ENCODE measurements at regions of chr14 and their contacts with region 1.

Region 1: DNA sequence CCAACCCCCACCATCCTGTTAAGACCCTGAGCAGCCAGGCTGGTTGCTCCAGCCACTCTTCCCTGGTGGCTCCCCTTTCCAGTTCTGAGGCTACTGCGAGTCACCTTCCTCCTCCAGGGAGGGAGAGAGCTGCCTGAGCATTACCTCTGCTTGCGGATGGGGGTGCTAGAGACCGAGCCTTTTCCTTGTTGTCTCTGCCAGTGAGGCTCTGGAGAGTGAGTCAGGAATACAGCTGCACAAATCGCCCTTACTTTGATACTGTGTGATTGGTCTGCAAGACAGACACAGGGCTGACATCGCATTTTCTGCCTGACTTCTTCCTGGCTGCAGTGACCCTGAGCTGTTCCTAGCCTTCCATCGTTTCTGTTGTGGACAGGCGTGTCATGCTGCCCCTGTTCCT is 94.3 kb downstream of the SLC25A47 start:
- DNase-seq: peak; percentile 88
- H3K4me3 ChIP-seq: no peak overlapping the region
- H3K27ac ChIP-seq: no peak overlapping the region
- H3K4me1 ChIP-seq: no peaks in the 10 kb centered on the region
- H3K27me3 ChIP-seq: no peaks in the 10 kb centered on the region
- CTCF ChIP-seq: peak; percentile 72 to 82
- POLR2A ChIP-seq: no peak

Region 2: DNA sequence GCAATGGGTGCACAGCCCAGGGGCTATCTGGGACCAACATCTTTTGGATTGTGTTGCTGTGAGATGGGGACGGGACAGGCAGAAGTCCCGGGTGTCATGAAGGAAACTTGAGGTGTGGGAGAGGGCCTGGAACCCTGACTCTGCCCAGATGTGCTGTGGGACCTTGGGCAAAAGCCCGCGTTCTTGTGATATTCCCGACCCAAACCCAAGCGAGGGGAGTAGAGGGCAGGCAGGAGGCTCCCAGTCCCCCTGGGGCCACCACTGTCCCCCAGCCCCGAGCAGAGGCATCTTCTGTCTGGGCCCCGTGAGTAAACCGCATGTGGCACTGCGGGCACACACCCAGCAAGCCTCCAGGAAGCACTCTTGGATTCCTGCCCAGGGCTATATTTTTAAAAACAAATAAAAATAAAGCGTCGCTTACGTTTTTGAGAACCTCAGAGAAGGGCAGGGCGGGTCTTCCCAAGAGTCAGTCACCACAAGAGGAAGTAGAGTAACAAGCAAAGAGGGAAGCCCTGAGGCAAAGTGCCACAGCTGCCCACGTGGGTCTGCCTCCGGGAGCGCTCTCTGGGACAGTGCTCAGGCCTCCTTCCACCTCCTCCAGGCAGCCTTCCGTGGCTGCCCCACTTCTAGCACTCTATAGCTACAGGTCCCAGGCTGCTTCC is 130.3 kb after region 1 on chr14:
- CTCF ChIA-PET with region 1: no interaction called
- POLR2A ChIA-PET with region 1: no interaction called
- dilution Hi-C with region 1: no loop called
- intact Hi-C with region 1: loop called (anchors 10 kb)
- DNase-seq: peak; percentile 34
- H3K4me3 ChIP-seq: no peak overlapping the region
- H3K27ac ChIP-seq: no peak overlapping the region
- H3K4me1 ChIP-seq: peaks cover 6% of the 10 kb centered on the region
- H3K27me3 ChIP-seq: no peaks in the 10 kb centered on the region
- CTCF ChIP-seq: no peak
- POLR2A ChIP-seq: no peak

Region 3: GRCh38 chr14:100567009-100567876 is 149.8 kb after region 1 on chr14:
- CTCF ChIA-PET with region 1: no interaction called
- POLR2A ChIA-PET with region 1: no interaction called
- dilution Hi-C with region 1: no loop called
- intact Hi-C with region 1: no loop called
- DNase-seq: no peak
- H3K4me3 ChIP-seq: no peak overlapping the region
- H3K27ac ChIP-seq: no peak overlapping the region
- H3K4me1 ChIP-seq: peaks cover 2% of the 10 kb centered on the region
- H3K27me3 ChIP-seq: peaks cover 28 to 32% of the 10 kb centered on the region in 2 experiments
- CTCF ChIP-seq: no peak
- POLR2A ChIP-seq: no peak